Activated CD4-positive, alpha-beta T cell treated with anti-CD3 and anti-CD28 coated beads, Interleukin-2, amount 10 ng/mL, durations not matched to agents 24 days and 14 days (primary cell): ENCODE measurements at regions of chr7 and their contacts with region 1.

Region 1: DNA sequence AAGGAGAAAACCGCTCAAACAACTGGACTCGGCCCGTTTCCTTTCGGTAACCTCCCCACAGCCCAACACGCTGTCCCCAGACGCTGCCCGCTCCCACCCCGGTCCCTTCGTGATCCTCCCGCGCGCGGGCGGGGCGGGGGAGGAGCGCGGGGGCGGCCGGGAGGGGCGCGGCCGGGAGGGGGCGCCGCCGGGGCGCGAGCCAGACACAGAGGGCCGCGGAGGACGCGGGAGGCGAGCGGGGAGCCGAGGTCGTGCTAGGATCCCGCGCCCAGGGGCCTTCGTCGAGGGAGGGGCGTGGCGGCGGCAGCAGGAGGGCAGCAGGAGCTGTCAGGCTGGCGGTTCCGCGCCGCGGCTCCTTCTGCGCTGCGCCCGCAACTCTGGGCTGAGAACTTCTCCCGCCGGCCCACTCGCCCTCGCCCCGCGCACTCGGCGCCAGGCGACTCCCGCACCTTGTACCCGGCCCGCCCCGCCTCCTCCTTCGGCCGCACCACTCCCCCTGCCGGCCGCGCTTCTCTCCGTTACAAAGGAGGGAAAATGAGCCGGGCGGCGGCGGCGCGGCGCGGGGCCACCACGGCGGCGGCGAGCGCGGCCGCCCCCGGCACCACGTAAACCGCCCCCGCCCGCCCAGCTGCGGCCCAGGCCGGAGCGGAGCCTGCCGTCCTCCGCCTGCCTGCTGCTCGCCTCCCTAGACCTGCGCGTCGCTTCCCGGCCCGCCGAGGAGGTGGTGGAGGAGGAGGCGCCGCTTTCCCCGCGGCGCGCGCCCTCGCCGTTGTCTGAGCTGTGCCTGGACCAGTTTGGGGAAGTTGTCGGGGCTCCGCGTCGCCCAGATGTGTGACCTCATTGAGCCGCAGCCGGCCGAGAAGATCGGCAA is at the start of gene CDK14:
- DNase-seq: peak; percentile 85
- H3K4me3 Mint-ChIP-seq: peak within 1 kb of the TSS; percentile 88
- H3K27ac Mint-ChIP-seq: peak within 1 kb of the TSS; percentile 80
- H3K4me1 Mint-ChIP-seq: peaks cover 14% of the 10 kb centered on the region
- H3K27me3 Mint-ChIP-seq: peaks cover 57% of the 10 kb centered on the region
- total RNA-seq, gene CDK14: 1.9 and 2.0 TPM in 2 replicates

Region 2: DNA sequence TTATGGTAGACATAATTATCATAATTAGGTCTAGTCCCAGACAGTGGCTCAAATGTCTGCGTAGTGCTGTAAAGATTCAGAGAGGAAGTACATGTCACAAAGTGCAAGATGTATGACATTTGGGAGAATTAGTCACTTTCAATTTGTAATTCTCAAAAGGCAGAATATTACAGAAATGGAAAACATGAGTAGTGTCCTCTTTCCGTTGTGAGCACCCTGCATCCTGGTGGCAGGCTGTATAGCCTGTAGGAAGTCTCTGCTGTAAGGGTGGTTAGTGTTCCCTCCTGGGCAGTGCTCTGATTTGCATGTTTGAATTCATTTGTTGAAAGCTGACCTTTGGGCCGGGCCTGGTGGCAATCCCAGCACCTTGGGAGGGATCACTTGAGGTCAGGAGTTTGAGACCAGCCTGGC is 17.1 kb after region 1 on chr7:
- intact Hi-C with region 1: loop called (anchors 2 kb)
- DNase-seq: no peak
- H3K4me3 Mint-ChIP-seq: peak overlapping the region; percentile 50
- H3K27ac Mint-ChIP-seq: peak overlapping the region; percentile 86
- H3K4me1 Mint-ChIP-seq: peaks cover 14% of the 10 kb centered on the region
- H3K27me3 Mint-ChIP-seq: no peaks in the 10 kb centered on the region